ENCODE measurements at regions of chr1 and their contacts with region 1.

Region 1: DNA sequence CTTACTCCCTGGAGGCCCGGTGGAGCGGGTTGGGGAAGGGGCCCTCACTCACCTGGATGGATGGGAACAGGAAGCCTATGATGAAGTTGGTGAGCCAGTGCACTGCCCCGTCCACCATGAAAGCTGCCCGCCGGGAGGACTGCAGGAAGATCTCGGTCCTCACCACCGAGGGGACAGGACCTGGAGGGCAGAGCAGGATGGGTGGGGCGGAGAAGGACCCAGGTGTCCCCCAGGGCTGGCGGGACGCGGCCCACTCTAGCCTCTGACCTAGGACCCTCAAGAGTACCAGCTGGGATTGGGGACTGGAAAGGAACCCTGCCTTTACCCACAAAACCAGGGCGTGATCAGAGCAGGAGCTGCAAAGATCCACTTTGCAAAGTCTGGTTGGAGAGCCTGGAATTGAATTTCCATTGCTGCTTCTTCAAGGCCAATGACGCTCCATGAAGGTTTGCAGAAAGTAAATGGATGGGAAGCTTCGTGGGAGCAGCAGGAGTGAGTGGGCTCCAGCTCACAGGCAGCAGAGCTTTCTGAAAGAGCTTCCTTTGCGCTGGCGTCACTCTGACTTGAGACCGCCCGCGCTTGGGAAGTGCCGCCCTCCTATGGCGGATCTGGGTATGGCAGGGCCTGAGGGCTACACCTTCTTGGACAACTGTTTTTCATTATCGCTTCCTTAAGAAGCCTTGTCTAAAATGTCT is 21.4 kb downstream of the SLC2A7 start:
- DNase-seq: peak; percentile 85
- H3K4me3 ChIP-seq: no peak overlapping the region
- H3K27ac ChIP-seq: no peak overlapping the region
- H3K4me1 ChIP-seq: no peaks in the 10 kb centered on the region
- H3K27me3 ChIP-seq: peaks cover 0 to 4% of the 10 kb centered on the region in 2 experiments
- CTCF ChIP-seq: peak; percentile 91 to 96
- POLR2A ChIP-seq: no peak

Region 2: GRCh38 chr1:8878448-8879347 is 126.1 kb before region 1 on chr1 and contains the start of gene ENO1:
- CTCF ChIA-PET with region 1: interaction called, 17 read pairs
- POLR2A ChIA-PET with region 1: no interaction called
- dilution Hi-C with region 1: no loop called
- intact Hi-C with region 1: no loop called
- DNase-seq: peak; percentile 99
- H3K4me3 ChIP-seq: peak within 1 kb of the TSS; percentile 48 to 83 (median 62)
- H3K27ac ChIP-seq: peak within 1 kb of the TSS; percentile 77
- H3K4me1 ChIP-seq: peaks cover 41% of the 10 kb centered on the region
- H3K27me3 ChIP-seq: no peaks in the 10 kb centered on the region
- CTCF ChIP-seq: no peak
- POLR2A ChIP-seq: peak; percentile 94
- total RNA-seq, gene ENO1: 1,530 and 1,593 TPM in 2 replicates

Region 3: GRCh38 chr1:8941906-8942305 is 62.9 kb before region 1 on chr1:
- CTCF ChIA-PET with region 1: interaction called, 33 read pairs
- POLR2A ChIA-PET with region 1: interaction called, 3 read pairs
- dilution Hi-C with region 1: no loop called
- intact Hi-C with region 1: no loop called
- DNase-seq: peak; percentile 76
- H3K4me3 ChIP-seq: no peak overlapping the region
- H3K27ac ChIP-seq: peak overlapping the region; percentile 54
- H3K4me1 ChIP-seq: peaks cover 15% of the 10 kb centered on the region
- H3K27me3 ChIP-seq: no peaks in the 10 kb centered on the region
- CTCF ChIP-seq: no peak
- POLR2A ChIP-seq: no peak

Region 4: GRCh38 chr1:8987881-8988617 is 16.8 kb before region 1 on chr1:
- CTCF ChIA-PET with region 1: interaction called, 119 read pairs
- POLR2A ChIA-PET with region 1: no interaction called
- dilution Hi-C with region 1: no loop called
- intact Hi-C with region 1: loop called (anchors 2 kb)
- DNase-seq: peak; percentile 64
- H3K4me3 ChIP-seq: no peak overlapping the region
- H3K27ac ChIP-seq: peak overlapping the region; percentile 50
- H3K4me1 ChIP-seq: peaks cover 16% of the 10 kb centered on the region
- H3K27me3 ChIP-seq: no peaks in the 10 kb centered on the region
- CTCF ChIP-seq: peak; percentile 88 to 93
- POLR2A ChIP-seq: no peak

Region 5: DNA sequence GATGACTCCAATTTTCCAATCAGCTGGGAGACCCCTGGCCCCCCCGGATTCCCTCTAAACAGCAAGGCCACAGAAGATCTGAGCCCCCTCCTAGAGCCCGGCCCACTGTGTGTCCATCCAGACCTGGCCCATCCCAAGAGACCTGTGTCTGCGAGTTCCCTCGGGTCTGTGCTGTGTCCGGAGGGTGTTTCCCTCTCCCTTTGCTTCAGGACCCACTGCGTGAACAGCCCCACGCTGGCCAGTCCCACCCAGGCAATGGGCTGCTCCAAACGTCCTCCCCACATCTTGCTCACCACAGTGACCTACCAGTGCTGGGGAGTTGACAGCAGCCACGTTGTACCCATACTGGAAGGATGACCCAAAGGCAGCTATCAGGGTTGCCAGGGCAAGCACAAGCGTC is 53.0 kb after region 1 on chr1:
- CTCF ChIA-PET with region 1: interaction called, 15 read pairs
- POLR2A ChIA-PET with region 1: interaction called, 4 read pairs
- dilution Hi-C with region 1: no loop called
- intact Hi-C with region 1: no loop called
- DNase-seq: no peak
- H3K4me3 ChIP-seq: no peak overlapping the region
- H3K27ac ChIP-seq: no peak overlapping the region
- H3K4me1 ChIP-seq: no peaks in the 10 kb centered on the region
- H3K27me3 ChIP-seq: no peaks in the 10 kb centered on the region
- CTCF ChIP-seq: no peak
- POLR2A ChIP-seq: no peak

Region 6: GRCh38 chr1:9110669-9111356 is 106.0 kb after region 1 on chr1:
- CTCF ChIA-PET with region 1: interaction called, 137 read pairs
- POLR2A ChIA-PET with region 1: no interaction called
- dilution Hi-C with region 1: no loop called
- intact Hi-C with region 1: no loop called
- DNase-seq: peak; percentile 85
- H3K4me3 ChIP-seq: no peak overlapping the region
- H3K27ac ChIP-seq: no peak overlapping the region
- H3K4me1 ChIP-seq: no peaks in the 10 kb centered on the region
- H3K27me3 ChIP-seq: no peaks in the 10 kb centered on the region
- CTCF ChIP-seq: peak; percentile 93
- POLR2A ChIP-seq: no peak

Region 7: GRCh38 chr1:9700340-9700739 is 695.5 kb after region 1 on chr1:
- CTCF ChIA-PET with region 1: no interaction called
- POLR2A ChIA-PET with region 1: no interaction called
- dilution Hi-C with region 1: no loop called
- intact Hi-C with region 1: no loop called
- DNase-seq: no peak
- H3K4me3 ChIP-seq: no peak overlapping the region
- H3K27ac ChIP-seq: no peak overlapping the region
- H3K4me1 ChIP-seq: no peaks in the 10 kb centered on the region
- H3K27me3 ChIP-seq: no peaks in the 10 kb centered on the region
- CTCF ChIP-seq: no peak
- POLR2A ChIP-seq: no peak

Measured in endothelial cell of umbilical vein (primary cell).